ENCODE measurements at regions of chr1 and their contacts with region 1.

Region 1: GRCh38 chr1:61453111-61453961 is 271.6 kb downstream of the TM2D1 start:
- DNase-seq: peak; percentile 97
- H3K4me3 ChIP-seq: no peak overlapping the region
- H3K27ac ChIP-seq: peak overlapping the region; percentile 89
- H3K4me1 ChIP-seq: peaks cover 39% of the 10 kb centered on the region
- H3K27me3 ChIP-seq: no peaks in the 10 kb centered on the region
- CTCF ChIP-seq: peak; percentile 75 to 79
- POLR2A ChIP-seq: peak; percentile 35

Region 2: GRCh38 chr1:60848583-60849188 is 604.6 kb before region 1 on chr1:
- CTCF ChIA-PET with region 1: interaction called, 5 read pairs
- POLR2A ChIA-PET with region 1: no interaction called
- dilution Hi-C with region 1: no loop called
- intact Hi-C with region 1: loop called (anchors 2 kb)
- DNase-seq: peak; percentile 79
- H3K4me3 ChIP-seq: no peak overlapping the region
- H3K27ac ChIP-seq: no peak overlapping the region
- H3K4me1 ChIP-seq: no peaks in the 10 kb centered on the region
- H3K27me3 ChIP-seq: no peaks in the 10 kb centered on the region
- CTCF ChIP-seq: peak; percentile 35 to 45
- POLR2A ChIP-seq: no peak

Region 3: DNA sequence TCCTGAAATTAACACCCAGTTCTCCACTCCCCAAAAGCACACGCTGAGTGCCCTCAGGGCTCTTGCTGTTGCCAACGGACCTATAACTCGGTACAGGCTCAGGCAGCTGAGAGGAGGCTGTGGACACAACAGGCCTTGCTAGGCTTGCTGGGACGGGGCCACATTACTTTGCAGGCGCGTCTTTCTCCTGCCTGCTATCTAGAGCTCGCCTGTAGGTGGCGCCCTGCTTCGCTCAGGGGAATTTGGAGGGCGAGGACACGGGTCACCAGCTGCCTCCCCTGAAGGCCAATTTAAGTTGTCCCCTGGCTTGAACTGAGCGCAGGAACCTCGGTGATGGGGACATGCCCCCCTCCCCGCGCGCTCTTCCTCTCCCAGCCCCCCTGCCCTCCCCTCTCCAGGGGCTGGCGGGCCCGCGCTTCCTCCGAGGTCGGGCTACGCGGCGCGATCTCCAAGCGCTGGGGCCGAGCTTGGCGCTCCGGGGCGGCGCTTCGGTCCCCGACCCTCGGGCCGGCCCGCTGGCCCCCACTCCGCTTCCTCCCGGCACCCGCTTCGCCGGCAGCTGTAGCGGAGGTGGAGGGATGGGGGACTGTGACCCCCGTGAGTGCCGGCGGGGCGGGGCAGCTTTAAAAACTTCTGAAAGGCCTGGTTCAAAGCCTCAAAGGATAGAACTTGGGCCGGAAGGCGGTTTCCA is 403.3 kb before region 1 on chr1:
- CTCF ChIA-PET with region 1: interaction called, 39 read pairs
- POLR2A ChIA-PET with region 1: interaction called, 5 read pairs
- dilution Hi-C with region 1: no loop called
- intact Hi-C with region 1: loop called (anchors 1 kb)
- DNase-seq: peak; percentile 93
- H3K4me3 ChIP-seq: peak overlapping the region; percentile 62 to 95 (median 92)
- H3K27ac ChIP-seq: peak overlapping the region; percentile 84
- H3K4me1 ChIP-seq: peaks cover 16% of the 10 kb centered on the region
- H3K27me3 ChIP-seq: no peaks in the 10 kb centered on the region
- CTCF ChIP-seq: peak; percentile 89 to 96
- POLR2A ChIP-seq: peak; percentile 40

Region 4: GRCh38 chr1:61202854-61203598 is 250.3 kb before region 1 on chr1:
- CTCF ChIA-PET with region 1: no interaction called
- POLR2A ChIA-PET with region 1: no interaction called
- dilution Hi-C with region 1: no loop called
- intact Hi-C with region 1: loop called (anchors 5 kb)
- DNase-seq: no peak
- H3K4me3 ChIP-seq: no peak overlapping the region
- H3K27ac ChIP-seq: no peak overlapping the region
- H3K4me1 ChIP-seq: peaks cover 14% of the 10 kb centered on the region
- H3K27me3 ChIP-seq: no peaks in the 10 kb centered on the region
- CTCF ChIP-seq: no peak
- POLR2A ChIP-seq: no peak

Region 5: GRCh38 chr1:61388566-61388965 is 64.8 kb before region 1 on chr1:
- CTCF ChIA-PET with region 1: interaction called, 3 read pairs
- POLR2A ChIA-PET with region 1: no interaction called
- dilution Hi-C with region 1: no loop called
- intact Hi-C with region 1: loop called (anchors 5 kb)
- DNase-seq: peak; percentile 92
- H3K4me3 ChIP-seq: no peak overlapping the region
- H3K27ac ChIP-seq: peak overlapping the region; percentile 71
- H3K4me1 ChIP-seq: peaks cover 23% of the 10 kb centered on the region
- H3K27me3 ChIP-seq: no peaks in the 10 kb centered on the region
- CTCF ChIP-seq: no peak
- POLR2A ChIP-seq: no peak

Region 6: GRCh38 chr1:61472876-61473275 is 19.5 kb after region 1 on chr1:
- CTCF ChIA-PET with region 1: no interaction called
- POLR2A ChIA-PET with region 1: no interaction called
- dilution Hi-C with region 1: no loop called
- intact Hi-C with region 1: no loop called
- DNase-seq: no peak
- H3K4me3 ChIP-seq: no peak overlapping the region
- H3K27ac ChIP-seq: no peak overlapping the region
- H3K4me1 ChIP-seq: no peaks in the 10 kb centered on the region
- H3K27me3 ChIP-seq: no peaks in the 10 kb centered on the region
- CTCF ChIP-seq: no peak
- POLR2A ChIP-seq: no peak

Region 7: GRCh38 chr1:61536174-61537108 is 83.1 kb after region 1 on chr1:
- CTCF ChIA-PET with region 1: no interaction called
- POLR2A ChIA-PET with region 1: no interaction called
- dilution Hi-C with region 1: no loop called
- intact Hi-C with region 1: no loop called
- DNase-seq: no peak
- H3K4me3 ChIP-seq: no peak overlapping the region
- H3K27ac ChIP-seq: no peak overlapping the region
- H3K4me1 ChIP-seq: no peaks in the 10 kb centered on the region
- H3K27me3 ChIP-seq: no peaks in the 10 kb centered on the region
- CTCF ChIP-seq: no peak
- POLR2A ChIP-seq: no peak

Region 8: GRCh38 chr1:61588736-61589672 is 135.7 kb after region 1 on chr1:
- CTCF ChIA-PET with region 1: interaction called, 6 read pairs
- POLR2A ChIA-PET with region 1: interaction called, 3 read pairs
- dilution Hi-C with region 1: no loop called
- intact Hi-C with region 1: loop called (anchors 1 kb)
- DNase-seq: peak; percentile 69
- H3K4me3 ChIP-seq: no peak overlapping the region
- H3K27ac ChIP-seq: no peak overlapping the region
- H3K4me1 ChIP-seq: no peaks in the 10 kb centered on the region
- H3K27me3 ChIP-seq: peaks cover 0 to 2% of the 10 kb centered on the region in 2 experiments
- CTCF ChIP-seq: peak; percentile 83 to 86
- POLR2A ChIP-seq: no peak

Measured in endothelial cell of umbilical vein (primary cell).